Vagina (tissue), 2 donors: ENCODE measurements at regions of chr1 and their contacts with region 1.

Region 1: DNA sequence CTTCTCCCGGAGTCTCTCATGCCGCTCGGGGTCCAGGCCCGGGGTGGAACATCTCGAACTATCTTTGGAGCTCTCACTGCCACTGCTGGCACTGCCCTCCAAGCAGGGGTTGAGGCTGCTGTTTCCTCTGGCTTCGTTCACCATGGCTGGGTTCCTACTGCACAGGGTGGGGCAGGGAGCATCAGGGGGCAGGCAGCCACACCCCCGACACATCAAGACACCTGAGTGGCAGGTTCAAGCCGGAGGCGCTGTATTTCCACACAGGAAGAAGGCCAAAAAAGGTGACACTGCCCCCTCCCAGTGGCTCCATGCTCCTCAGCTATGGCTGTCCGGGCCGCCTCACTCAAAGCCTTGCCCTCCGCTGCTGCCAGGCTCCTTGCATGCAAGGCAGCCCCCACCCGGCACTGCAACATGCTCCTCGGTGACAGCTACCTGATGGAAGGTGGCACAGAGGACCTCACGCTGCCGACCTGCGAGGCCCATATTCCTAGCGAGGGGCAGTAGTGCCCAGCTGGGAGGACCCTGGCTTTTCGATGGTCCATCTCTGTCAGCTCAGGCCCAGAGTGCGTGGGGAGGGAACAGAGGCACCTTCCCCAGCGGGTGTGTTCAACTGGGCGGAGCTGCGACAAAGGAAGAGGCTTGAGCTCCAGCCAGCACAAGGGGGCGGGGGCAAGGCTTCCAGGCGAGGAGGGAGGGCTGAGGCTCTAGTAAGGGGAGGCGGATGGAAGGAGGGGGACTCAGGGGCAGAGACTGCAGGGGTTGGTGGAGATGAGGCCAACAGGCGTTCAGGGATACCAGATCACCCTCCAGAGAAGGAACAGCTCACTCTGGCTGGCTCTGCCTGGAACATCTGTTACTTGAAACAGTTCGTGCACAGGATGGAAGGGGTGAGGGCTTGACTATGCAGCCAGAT is 2.5 kb downstream of the MTHFR start:
- DNase-seq: no peak
- H3K4me3 ChIP-seq: peak overlapping the region; percentile 52 to 56
- H3K27ac ChIP-seq: peak overlapping the region; percentile 100
- H3K4me1 ChIP-seq: peaks cover 63% of the 10 kb centered on the region
- H3K27me3 ChIP-seq: no peaks in the 10 kb centered on the region
- CTCF ChIP-seq: no peak
- POLR2A ChIP-seq: peak in 1 of 2 donors; percentile 64

Region 2: DNA sequence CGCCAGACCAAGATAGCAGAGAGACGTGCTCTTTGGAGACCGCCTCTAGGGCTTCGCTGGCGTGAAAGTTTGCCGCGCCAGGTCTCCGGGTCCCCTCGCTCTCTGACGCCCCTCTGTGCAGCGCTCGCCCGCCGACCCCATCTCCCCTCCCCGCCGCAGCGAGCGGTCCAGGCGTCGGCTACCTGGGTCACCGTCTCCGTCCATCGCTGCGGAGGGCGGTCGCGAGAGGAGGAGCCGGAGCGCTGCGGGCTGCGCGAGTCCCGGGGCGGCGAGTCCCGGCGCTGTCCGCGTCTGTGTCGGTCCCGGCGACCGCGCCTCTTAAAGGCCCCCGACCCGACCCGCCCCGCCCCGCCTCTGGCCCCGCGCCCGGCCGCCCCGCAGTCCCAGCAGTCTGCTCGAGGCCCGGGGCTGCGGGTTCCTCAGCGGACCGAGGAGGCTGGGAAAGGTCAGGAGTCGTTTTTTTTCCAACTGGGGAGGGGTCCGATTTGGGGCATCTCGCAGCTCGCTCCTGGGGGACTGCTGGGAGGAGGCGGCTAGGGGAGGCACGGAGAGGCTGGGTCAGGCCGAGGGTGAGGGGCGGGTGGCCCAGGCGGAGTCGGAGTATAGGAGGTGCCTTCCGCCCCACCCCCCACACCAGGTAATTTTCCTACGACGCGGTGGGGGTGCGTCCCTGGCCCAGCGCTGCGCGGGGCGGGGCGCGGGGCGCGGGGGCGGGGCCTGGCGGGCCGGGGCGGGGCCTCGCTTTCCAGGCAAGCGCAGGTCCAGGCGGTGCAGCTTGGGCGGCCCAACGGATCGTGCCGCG is 148.9 kb before region 1 on chr1 and contains the starts of genes FBXO2 and FBXO44:
- intact Hi-C with region 1: loop called (anchors 1 kb)
- DNase-seq: no peak
- H3K4me3 ChIP-seq: peak within 1 kb of the TSS; percentile 58 to 94
- H3K27ac ChIP-seq: peak within 1 kb of the TSS; percentile 82
- H3K4me1 ChIP-seq: peaks cover 38% of the 10 kb centered on the region
- H3K27me3 ChIP-seq: peaks cover 9% of the 10 kb centered on the region
- CTCF ChIP-seq: no peak
- POLR2A ChIP-seq: no peak
- total RNA-seq, gene FBXO2: 27.3 TPM
- total RNA-seq, gene FBXO44: 38.3 TPM

Region 3: GRCh38 chr1:11740258-11741192 is 62.7 kb before region 1 on chr1:
- intact Hi-C with region 1: loop called (anchors 5 kb)
- DNase-seq: no peak
- H3K4me3 ChIP-seq: no peak overlapping the region
- H3K27ac ChIP-seq: no peak overlapping the region
- H3K4me1 ChIP-seq: peaks cover 43% of the 10 kb centered on the region
- H3K27me3 ChIP-seq: no peaks in the 10 kb centered on the region
- CTCF ChIP-seq: no peak
- POLR2A ChIP-seq: no peak